ENCODE measurements at regions of chr3 and their contacts with region 1.

Region 1: GRCh38 chr3:17645072-17645698 is 97.2 kb downstream of the TBC1D5 start:
- DNase-seq: peak; percentile 55
- H3K4me3 ChIP-seq: no peak overlapping the region
- H3K27ac ChIP-seq: no peak overlapping the region
- H3K4me1 ChIP-seq: peaks cover 2% of the 10 kb centered on the region
- H3K27me3 ChIP-seq: no peaks in the 10 kb centered on the region
- CTCF ChIP-seq: peak; percentile 72 to 78

Region 2: DNA sequence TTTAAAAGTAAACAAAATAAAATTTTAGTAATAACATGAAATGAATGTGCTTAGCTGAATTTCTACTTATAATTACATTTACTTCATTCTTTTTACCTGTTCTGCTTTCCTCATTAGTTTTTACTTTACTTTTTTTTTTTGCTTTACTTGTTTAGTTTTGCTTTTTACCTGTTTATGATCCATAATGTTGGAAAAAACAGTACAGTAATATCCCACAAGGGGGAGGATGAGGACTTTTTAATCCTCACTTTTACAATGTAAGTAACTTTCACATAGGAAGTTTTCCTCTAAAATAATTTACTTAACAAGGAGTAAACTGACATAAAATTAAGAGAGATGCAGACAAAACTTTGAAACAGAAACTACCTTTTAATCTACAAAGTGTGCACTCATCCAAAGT is 171.4 kb before region 1 on chr3:
- CTCF ChIA-PET with region 1: no interaction called
- dilution Hi-C with region 1: no loop called
- in situ Hi-C with region 1: no loop called
- intact Hi-C with region 1: loop called (anchors 5 kb)
- DNase-seq: no peak
- H3K4me3 ChIP-seq: no peak overlapping the region
- H3K27ac ChIP-seq: no peak overlapping the region
- H3K4me1 ChIP-seq: no peaks in the 10 kb centered on the region
- H3K27me3 ChIP-seq: no peaks in the 10 kb centered on the region
- CTCF ChIP-seq: peak; percentile 19 to 32

Region 3: DNA sequence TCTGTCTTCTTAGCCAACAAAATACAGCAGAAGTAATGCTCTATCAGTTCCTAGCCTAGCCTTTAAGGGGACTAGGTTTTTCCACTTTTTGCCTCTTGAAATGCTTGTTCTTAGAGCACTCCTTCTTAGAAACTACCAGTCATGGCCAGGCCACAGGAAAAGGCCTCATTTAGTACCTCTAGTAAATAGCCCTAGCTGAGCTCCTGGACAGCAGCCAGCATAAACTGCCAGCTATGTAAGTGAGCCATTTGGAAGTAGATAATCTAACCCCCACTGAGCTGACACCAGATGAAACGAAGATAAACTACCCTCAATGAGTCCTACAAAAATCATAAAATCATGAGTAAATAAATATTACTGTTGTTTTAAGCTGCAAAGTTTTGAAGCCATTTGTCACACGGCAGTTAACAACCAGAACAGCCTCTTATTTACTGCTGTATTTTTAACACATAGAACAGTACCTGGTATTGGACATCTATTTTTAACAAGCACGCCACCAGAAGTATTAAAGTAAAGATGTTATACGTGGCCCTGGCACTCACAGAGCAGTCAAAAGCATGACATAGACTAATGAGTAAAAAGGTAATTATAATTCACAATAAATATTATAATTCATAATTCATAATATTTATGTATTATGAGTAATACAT is 85.3 kb after region 1 on chr3:
- CTCF ChIA-PET with region 1: interaction called, 4 read pairs
- dilution Hi-C with region 1: loop called (anchors 5 kb)
- in situ Hi-C with region 1: no loop called
- intact Hi-C with region 1: no loop called
- DNase-seq: no peak
- H3K4me3 ChIP-seq: no peak overlapping the region
- H3K27ac ChIP-seq: no peak overlapping the region
- H3K4me1 ChIP-seq: no peaks in the 10 kb centered on the region
- H3K27me3 ChIP-seq: no peaks in the 10 kb centered on the region
- CTCF ChIP-seq: no peak

Region 4: DNA sequence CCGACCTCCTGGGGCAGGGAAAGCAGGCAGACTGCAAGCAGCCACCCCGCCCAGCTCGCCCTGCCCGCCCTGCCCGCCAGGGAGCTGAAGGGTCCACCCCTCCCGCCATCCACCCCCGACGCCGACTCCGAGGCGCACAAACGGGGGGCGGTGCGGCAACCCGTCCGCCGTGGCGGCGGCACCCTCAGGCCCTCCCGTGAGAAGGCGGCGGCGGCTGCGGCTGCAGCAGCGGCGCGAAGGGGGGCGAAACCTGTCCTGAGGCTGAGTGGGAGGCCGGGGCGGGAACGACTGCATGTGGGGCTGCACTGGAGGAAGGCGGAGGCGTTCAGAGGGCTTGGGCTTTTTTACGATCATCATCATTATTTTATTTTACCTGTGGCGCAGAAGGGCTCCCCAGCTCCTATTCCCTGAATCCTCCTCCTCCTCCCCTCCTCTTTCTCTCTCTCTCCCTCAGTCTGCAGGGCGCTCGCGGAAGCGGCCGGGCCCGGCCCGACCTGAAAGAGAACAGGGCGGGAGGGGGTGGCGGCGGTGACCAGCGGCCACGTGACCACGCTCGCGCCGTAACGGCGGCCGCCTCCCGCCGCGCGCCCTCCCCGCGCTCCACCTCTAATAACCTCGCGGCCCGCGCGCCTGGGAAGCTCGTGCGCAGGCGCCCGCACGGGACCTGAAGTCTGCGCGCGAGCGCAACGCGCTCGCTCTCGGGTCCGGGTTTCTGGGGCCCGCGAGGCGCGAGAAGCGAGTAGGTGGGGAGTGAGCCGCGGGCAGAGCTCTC is 97.1 kb after region 1 on chr3 and contains the start of gene TBC1D5:
- CTCF ChIA-PET with region 1: interaction called, 5 read pairs
- dilution Hi-C with region 1: no loop called
- in situ Hi-C with region 1: no loop called
- intact Hi-C with region 1: loop called (anchors 5 kb)
- DNase-seq: peak; percentile 99
- H3K4me3 ChIP-seq: peak within 1 kb of the TSS; percentile 82 to 86 (median 86)
- H3K27ac ChIP-seq: peak within 1 kb of the TSS; percentile 87
- H3K4me1 ChIP-seq: peaks cover 21% of the 10 kb centered on the region
- H3K27me3 ChIP-seq: no peaks in the 10 kb centered on the region
- CTCF ChIP-seq: no peak
- total RNA-seq, gene TBC1D5: 35.0 to 59.7 TPM

Region 5: GRCh38 chr3:17979252-17979651 is 334.1 kb after region 1 on chr3:
- CTCF ChIA-PET with region 1: no interaction called
- dilution Hi-C with region 1: no loop called
- in situ Hi-C with region 1: no loop called
- intact Hi-C with region 1: no loop called
- DNase-seq: no peak
- H3K4me3 ChIP-seq: no peak overlapping the region
- H3K27ac ChIP-seq: no peak overlapping the region
- H3K4me1 ChIP-seq: no peaks in the 10 kb centered on the region
- H3K27me3 ChIP-seq: no peaks in the 10 kb centered on the region
- CTCF ChIP-seq: peak in 1 of 2 donors; percentile 31